HEK293 (cell line): ENCODE measurements at regions of chr20 and their contacts with region 1.

Region 1: DNA sequence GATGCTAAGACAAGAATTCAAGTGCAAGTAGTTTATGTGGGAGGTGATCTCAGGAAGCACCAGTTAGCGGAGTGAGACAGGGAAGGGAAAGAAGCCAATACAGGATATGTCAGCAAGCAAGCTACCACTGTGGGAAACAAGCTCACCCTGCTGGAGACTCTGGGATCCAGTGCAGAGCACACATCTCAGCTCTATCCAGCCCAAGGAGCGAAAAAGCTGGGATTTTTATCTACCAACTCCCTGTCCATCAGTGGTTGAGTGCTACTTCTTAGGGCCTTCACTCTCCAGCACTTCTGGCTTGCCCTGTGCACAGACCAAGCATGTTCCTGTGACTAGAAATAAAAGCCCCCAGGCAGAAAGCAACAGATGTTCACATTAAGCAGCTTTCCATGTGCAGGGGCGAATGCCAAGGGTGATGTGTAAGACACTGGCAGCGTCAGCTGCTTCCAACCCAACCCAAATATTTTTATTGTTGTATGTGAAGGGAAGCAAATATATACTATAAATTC is 10.8 kb upstream of the RNF24 start:
- H3K4me3 ChIP-seq: no peak overlapping the region
- H3K27ac ChIP-seq: no peak overlapping the region
- H3K4me1 ChIP-seq: peaks cover 6% of the 10 kb centered on the region; the same call in 1 of the 2 replicates
- CTCF ChIP-seq: no peak

Region 2: GRCh38 chr20:3927486-3928291 is 98.5 kb before region 1 on chr20:
- CTCF ChIA-PET with region 1: no interaction called
- POLR2A ChIA-PET with region 1: no interaction called
- H3K4me3 ChIP-seq: no peak overlapping the region
- H3K27ac ChIP-seq: peak overlapping the region; percentile 30; the same call in 1 of the 2 replicates
- H3K4me1 ChIP-seq: no peaks in the 10 kb centered on the region
- CTCF ChIP-seq: no peak

Region 3: GRCh38 chr20:3970016-3970415 is 56.1 kb before region 1 on chr20:
- CTCF ChIA-PET with region 1: no interaction called
- POLR2A ChIA-PET with region 1: no interaction called
- H3K4me3 ChIP-seq: no peak overlapping the region
- H3K27ac ChIP-seq: no peak overlapping the region
- H3K4me1 ChIP-seq: no peaks in the 10 kb centered on the region
- CTCF ChIP-seq: no peak

Region 4: DNA sequence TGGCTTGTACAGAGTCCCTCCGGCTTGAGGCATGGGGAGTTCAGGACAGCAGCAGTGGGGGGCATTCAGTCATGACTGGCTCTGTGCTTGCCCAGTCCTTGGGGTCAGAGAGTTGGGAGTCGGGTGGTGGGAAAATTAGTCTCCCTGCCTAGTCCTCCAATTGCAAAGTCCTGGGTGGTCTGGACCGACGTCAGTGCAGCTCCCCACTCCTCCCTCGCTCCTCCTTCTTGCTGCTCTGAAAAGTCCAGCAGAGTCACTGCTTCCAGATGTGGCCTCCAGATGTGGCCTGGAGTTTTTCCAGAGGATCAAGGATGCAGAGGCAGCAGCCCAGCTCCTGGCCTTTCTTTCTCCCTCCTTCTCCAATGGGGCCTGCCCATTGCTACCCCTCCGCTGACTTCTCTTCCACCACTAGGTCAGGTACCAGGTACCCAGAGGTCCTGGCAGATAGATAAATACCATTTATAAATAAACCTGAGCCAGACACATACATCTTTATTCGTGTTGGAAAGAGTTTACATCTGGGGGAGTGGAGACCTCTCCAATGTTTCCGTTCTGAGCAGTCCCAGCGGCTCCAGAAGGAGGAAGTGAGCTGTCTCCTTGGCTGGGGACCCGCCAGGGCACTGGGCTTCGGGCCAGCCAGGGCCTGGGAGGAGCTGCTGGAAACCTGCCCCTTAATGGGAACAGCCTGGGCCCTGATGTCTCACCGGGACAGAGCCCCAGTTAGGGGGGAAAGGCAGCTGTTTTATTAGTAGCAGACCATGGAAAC is 38.2 kb after region 1 on chr20:
- CTCF ChIA-PET with region 1: interaction called, 12 read pairs
- POLR2A ChIA-PET with region 1: interaction called, 3 read pairs
- H3K4me3 ChIP-seq: no peak overlapping the region
- H3K27ac ChIP-seq: 0 out of 2 replicates have a peak overlapping the region, but pooled peaks have one; percentile 5
- H3K4me1 ChIP-seq: peaks cover 4% of the 10 kb centered on the region
- CTCF ChIP-seq: no peak

Region 5: DNA sequence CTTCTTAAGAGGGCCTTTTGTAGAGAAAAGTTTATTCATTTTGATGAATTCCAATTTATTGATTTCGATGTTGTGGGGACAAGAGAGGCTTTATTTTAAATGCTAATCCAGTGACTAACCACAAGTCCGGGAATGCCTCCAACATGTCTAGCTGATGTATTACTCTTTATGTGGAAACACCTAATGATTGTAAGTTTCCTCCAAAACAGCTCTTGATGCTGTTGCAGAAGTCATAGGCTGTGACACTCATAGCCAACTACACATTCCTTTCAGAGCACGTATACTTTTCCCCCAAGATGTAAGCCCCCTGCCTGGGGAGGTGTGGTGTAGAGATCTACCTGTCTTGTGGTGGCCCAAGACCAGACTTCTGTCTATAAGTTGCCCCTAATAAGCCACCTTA is 50.5 kb after region 1 on chr20:
- CTCF ChIA-PET with region 1: interaction called, 39 read pairs
- POLR2A ChIA-PET with region 1: no interaction called
- H3K4me3 ChIP-seq: no peak overlapping the region
- H3K27ac ChIP-seq: no peak overlapping the region
- H3K4me1 ChIP-seq: no peaks in the 10 kb centered on the region
- CTCF ChIP-seq: no peak

Region 6: DNA sequence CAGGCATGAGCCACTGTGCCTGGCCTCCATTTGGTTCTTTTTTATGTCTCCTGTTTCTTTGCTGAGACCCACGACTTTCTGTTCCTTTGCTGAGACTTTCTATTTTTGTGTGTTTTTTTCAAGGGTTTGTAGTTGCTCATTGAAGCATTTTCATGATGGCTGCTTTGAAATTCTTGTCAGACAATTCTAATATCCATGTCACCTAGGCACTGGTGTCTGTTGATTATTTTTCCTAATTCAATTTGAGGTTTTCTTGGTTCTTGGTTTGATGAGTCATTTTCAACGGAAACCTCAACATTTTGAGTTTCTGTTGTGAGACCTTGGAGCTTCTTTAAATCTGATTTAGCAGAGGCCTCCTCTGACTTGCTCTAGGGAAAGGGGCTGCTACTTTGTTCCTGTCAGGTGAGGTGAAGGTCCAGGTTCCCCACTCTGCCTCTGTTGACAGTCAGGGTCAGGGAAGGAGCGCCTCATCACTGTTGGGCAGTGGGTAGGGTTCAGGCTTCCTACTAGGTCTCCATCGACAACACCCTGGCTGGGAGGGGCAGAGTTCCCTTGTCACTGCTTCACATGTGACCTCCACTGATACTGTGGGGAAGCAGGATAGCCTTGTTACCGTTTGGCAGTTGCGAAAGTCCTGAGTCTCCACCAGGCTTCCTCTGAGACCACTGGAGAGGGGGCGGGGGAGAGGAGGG is 56.4 kb after region 1 on chr20:
- CTCF ChIA-PET with region 1: interaction called, 10 read pairs
- POLR2A ChIA-PET with region 1: no interaction called
- H3K4me3 ChIP-seq: no peak overlapping the region
- H3K27ac ChIP-seq: no peak overlapping the region
- H3K4me1 ChIP-seq: peaks cover 4% of the 10 kb centered on the region; the same call in 1 of the 2 replicates
- CTCF ChIP-seq: no peak